ENCODE measurements at regions of chr11 and their contacts with region 1.

Region 1: DNA sequence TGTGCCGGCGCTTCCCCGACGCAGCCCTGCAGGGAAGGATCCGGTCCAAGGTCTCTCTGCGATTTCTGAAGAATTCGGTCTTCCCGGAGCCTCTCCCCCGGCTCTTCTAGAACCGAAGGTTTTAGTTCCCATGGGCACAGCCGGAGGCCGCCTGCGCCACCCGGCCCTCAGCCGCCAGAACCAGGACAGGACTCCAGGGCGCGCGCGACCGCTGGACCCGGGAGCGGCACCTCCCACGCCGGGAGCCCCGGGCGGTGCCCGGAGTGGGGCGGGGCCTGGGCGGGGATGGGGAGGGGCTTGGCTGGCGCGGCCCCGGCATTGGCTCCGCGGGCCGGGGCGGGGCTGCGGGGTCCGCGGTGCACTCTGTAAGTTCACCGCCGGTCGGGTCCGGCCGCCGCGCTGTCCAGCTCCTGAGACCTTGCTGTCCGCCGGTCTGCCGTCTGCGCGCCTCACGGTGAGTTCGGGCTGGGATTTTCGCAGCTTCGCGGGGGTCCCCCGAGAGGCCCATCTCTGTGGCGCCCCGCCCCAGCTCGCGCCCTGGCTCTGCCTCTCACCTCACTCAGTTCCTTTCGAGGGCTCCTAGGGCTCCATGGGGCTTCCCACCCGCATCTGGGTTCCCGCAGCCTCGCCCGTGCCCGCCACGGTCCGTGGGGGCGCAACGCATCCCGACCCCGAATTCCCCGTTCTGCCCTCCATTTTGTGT is at the start of gene CDC42EP2:
- DNase-seq: peak; percentile 73
- ATAC-seq: peak; percentile 91
- H3K4me3 Mint-ChIP-seq: peak within 1 kb of the TSS; percentile 74
- H3K27ac Mint-ChIP-seq: no peak within 1 kb of the TSS
- H3K4me1 Mint-ChIP-seq: peaks cover 4% of the 10 kb centered on the region
- H3K27me3 Mint-ChIP-seq: peaks cover 9% of the 10 kb centered on the region
- CTCF ChIP-seq: no peak
- total RNA-seq, gene CDC42EP2: 1.2 TPM in 1 of 2 experiments, not detected in the other

Region 2: DNA sequence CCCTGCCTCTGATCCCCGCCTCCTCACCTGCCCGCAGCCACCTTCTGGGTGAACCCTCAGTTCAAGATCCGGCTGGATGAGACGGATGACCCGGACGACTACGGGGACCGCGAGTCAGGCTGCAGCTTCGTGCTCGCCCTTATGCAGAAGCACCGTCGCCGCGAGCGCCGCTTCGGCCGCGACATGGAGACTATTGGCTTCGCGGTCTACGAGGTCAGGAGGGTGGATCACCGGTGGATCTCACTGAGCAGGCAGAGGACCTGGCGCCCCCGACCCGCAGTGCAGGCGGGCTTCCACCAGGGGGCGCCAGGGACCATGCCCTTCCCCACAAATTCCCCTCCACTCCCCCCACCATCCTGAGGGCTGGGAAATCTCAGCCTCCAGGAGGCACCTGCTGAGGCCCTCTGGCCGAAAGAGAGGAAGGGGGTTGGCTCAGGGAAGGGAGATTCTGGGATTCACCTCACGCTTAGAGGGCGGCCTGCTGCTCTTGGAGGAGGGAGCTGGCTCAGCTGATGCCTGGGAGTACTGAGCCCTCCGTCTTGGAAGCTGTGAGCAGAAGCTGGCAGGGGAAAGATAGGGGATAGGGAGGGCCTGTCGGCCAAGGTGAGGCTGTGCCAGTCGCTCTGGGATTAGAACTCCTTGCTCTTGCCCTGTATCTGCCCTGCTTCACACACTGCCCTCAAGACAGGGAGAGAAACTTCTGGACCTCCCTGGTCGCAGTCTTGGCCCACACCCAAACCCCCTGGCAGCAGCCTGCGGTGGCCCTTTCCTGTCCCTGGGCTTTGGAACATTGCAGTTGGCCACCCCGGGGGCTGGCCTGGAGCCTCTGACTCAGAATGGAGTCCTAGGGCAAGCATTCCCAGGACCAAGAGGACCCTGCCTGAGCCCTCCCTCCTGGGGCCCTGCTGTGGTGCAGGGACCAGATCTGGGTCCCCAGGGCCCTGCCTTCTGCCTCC is 109.7 kb before region 1 on chr11:
- CTCF ChIA-PET with region 1: interaction called, 36 read pairs
- POLR2A ChIA-PET with region 1: interaction called, 3 read pairs
- intact Hi-C with region 1: no loop called
- DNase-seq: peak; percentile 55
- ATAC-seq: peak; percentile 90
- H3K4me3 Mint-ChIP-seq: no peak overlapping the region
- H3K27ac Mint-ChIP-seq: no peak overlapping the region
- H3K4me1 Mint-ChIP-seq: peaks cover 3% of the 10 kb centered on the region
- H3K27me3 Mint-ChIP-seq: no peaks in the 10 kb centered on the region
- CTCF ChIP-seq: peak; percentile 98

Region 3: GRCh38 chr11:65243773-65244172 is 70.9 kb before region 1 on chr11:
- CTCF ChIA-PET with region 1: interaction called, 34 read pairs
- POLR2A ChIA-PET with region 1: no interaction called
- intact Hi-C with region 1: no loop called
- DNase-seq: no peak
- ATAC-seq: no peak
- H3K4me3 Mint-ChIP-seq: no peak overlapping the region
- H3K27ac Mint-ChIP-seq: no peak overlapping the region
- H3K4me1 Mint-ChIP-seq: no peaks in the 10 kb centered on the region
- H3K27me3 Mint-ChIP-seq: no peaks in the 10 kb centered on the region
- CTCF ChIP-seq: no peak

Region 4: DNA sequence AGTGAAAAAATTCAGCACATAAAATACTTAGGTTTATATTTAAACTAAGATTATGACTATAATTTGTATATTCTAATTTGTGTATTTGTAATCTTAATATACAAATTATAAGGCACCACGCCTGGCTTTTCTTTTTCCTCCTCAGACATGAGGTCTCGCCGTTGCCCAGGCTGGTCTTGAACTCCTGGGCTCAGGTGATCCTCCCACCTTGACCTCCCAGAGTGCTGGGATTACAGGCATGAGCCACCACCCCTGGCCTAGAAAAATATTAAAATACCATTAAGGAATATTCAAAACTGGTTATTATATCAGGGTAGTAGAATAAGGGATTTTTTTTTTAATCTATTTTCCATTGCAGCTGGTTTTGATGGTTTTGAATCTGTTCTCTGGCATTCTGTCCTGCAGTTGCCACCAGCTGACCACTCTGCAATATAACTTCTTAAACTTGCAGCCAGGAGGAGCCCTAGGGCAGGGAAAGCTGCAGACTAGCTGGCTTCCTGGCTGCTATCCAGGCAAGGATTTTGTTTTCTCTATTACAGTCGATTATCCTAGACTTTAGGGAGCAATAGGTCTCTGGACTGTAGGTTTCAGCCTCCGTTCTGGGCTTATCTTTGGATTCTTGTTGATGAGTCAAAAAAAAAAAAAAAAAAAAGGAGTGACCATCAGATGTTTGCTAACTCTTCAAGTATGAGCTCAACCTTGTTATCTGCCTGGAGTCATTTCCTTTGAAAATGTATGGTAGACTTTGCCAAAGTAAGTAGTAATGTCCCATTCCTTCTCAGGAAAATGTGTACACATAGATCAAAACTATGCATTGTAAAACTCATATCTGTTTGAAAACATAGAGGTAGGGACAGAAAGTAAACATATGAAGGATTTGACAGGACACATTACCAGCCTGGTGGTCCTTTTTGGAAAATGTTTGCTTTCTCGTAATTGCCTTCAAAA is 39.6 kb before region 1 on chr11:
- CTCF ChIA-PET with region 1: interaction called, 47 read pairs
- POLR2A ChIA-PET with region 1: interaction called, 4 read pairs
- intact Hi-C with region 1: loop called (anchors 5 kb)
- DNase-seq: peak; percentile 40
- ATAC-seq: peak; percentile 45
- H3K4me3 Mint-ChIP-seq: no peak overlapping the region
- H3K27ac Mint-ChIP-seq: no peak overlapping the region
- H3K4me1 Mint-ChIP-seq: peaks cover 12% of the 10 kb centered on the region
- H3K27me3 Mint-ChIP-seq: no peaks in the 10 kb centered on the region
- CTCF ChIP-seq: peak; percentile 64

Region 5: GRCh38 chr11:65340226-65340625 is 25.6 kb after region 1 on chr11:
- CTCF ChIA-PET with region 1: interaction called, 265 read pairs
- POLR2A ChIA-PET with region 1: no interaction called
- intact Hi-C with region 1: no loop called
- DNase-seq: no peak
- ATAC-seq: no peak
- H3K4me3 Mint-ChIP-seq: no peak overlapping the region
- H3K27ac Mint-ChIP-seq: peak overlapping the region; percentile 39
- H3K4me1 Mint-ChIP-seq: peaks cover 23% of the 10 kb centered on the region
- H3K27me3 Mint-ChIP-seq: no peaks in the 10 kb centered on the region
- CTCF ChIP-seq: no peak